Activated CD4-positive, alpha-beta T cell treated with anti-CD3 and anti-CD28 coated beads for 36 hours (primary cell): ENCODE measurements at regions of chr19 and their contacts with region 1.

Region 1: DNA sequence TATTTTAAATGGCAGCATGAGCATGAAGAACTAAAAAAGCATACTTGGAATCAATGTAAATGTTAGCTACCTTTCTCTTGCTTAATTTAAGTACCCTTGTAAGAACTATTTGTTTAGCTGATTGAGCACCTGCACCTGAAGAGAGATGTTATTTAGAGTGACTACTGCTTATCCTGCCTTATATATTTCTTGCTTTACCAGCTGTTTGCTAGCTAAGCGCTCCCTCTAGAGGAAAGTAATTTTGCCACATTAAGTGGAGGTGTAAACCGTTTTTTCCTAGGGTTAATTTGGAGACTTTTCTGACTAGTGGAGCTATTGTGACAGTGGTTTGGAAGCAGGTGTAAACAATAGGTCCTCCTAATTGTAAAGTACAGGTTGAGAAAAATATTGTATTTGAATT is 19.4 kb upstream of the PSG2 start:
- DNase-seq: no peak
- ATAC-seq: no peak
- H3K4me3 Mint-ChIP-seq: no peak overlapping the region
- H3K27ac Mint-ChIP-seq: no peak overlapping the region
- H3K4me1 Mint-ChIP-seq: no peaks in the 10 kb centered on the region
- H3K27me3 Mint-ChIP-seq: peaks cover 4% of the 10 kb centered on the region

Region 2: DNA sequence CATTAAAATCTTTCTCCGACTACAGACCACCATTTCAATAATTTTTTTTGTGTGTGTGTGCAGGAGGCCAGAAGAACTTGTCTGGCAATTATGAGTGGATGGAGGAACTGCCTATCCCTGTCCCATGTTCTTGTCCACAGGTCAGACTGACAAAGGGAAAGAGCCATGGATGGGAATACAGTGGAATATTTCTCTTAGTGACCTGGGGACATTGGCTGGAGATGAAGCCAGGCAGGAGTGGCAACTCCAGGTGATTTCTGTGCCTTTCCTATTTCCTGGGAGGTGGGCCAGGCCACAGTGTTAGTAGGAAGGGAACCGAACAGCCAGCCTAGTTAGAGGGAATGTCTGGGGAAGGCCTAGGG is 163.7 kb after region 1 on chr19:
- CTCF ChIA-PET with region 1: no interaction called
- POLR2A ChIA-PET with region 1: no interaction called
- intact Hi-C with region 1: loop called in 1 of 2 experiments (anchors 5 kb)
- DNase-seq: no peak
- ATAC-seq: no peak
- H3K4me3 Mint-ChIP-seq: no peak overlapping the region
- H3K27ac Mint-ChIP-seq: no peak overlapping the region
- H3K4me1 Mint-ChIP-seq: no peaks in the 10 kb centered on the region
- H3K27me3 Mint-ChIP-seq: peaks cover 6% of the 10 kb centered on the region

Region 3: DNA sequence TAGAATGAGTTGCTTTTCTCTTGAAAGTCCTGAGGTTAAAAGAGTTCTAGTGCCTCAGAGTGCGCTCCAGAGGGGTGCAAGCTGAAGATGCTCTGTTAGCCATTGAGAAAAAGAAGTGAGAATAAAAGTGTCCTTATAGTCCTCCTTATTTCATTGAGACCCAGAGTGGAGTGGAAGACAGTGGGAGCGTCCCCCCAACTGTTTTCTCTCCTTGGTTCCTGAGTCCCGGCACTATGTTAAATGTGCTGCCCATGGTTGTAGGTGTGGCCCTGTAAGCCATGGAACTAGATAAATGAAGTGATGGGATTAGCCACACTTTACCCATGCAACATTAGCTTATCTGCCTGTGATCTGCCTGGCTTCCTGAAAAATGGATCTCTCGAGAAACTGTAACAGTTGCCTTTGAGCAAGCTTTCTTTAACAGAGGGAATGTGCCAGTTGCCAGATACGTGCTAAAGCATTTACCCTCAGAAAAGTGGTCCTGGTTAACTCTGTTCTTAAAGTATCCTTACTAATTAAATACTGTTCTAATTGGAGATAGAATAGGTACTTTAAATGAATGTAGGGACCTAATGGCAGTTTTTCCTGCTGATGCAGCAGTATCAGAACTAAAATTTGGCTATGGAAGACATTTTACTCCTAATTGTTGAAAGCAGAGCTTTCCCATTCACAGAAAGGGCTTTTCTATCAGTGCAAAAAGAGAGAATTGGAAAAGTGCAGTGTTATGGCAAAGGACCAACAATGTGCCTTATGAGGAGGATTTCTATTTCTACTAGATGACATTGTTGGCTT is 188.8 kb after region 1 on chr19:
- CTCF ChIA-PET with region 1: interaction called, 3 read pairs
- POLR2A ChIA-PET with region 1: no interaction called
- intact Hi-C with region 1: loop called (anchors 2 kb)
- DNase-seq: peak; percentile 43
- ATAC-seq: no peak
- H3K4me3 Mint-ChIP-seq: no peak overlapping the region
- H3K27ac Mint-ChIP-seq: no peak overlapping the region
- H3K4me1 Mint-ChIP-seq: no peaks in the 10 kb centered on the region
- H3K27me3 Mint-ChIP-seq: peaks cover 4% of the 10 kb centered on the region